PC-9 (cell line): ENCODE measurements at regions of chr5 and their contacts with region 1.

Region 1: GRCh38 chr5:43120720-43121564 is at the start of gene ZNF131:
- DNase-seq: peak; percentile 95 to 100
- H3K4me3 ChIP-seq: peak within 1 kb of the TSS; percentile 73
- H3K27ac ChIP-seq: peak within 1 kb of the TSS; percentile 91
- H3K4me1 ChIP-seq: peaks cover 31% of the 10 kb centered on the region
- H3K27me3 ChIP-seq: no peaks in the 10 kb centered on the region
- CTCF ChIP-seq: no peak
- total RNA-seq, gene ZNF131: 79.5 and 82.4 TPM in 2 replicates

Region 2: DNA sequence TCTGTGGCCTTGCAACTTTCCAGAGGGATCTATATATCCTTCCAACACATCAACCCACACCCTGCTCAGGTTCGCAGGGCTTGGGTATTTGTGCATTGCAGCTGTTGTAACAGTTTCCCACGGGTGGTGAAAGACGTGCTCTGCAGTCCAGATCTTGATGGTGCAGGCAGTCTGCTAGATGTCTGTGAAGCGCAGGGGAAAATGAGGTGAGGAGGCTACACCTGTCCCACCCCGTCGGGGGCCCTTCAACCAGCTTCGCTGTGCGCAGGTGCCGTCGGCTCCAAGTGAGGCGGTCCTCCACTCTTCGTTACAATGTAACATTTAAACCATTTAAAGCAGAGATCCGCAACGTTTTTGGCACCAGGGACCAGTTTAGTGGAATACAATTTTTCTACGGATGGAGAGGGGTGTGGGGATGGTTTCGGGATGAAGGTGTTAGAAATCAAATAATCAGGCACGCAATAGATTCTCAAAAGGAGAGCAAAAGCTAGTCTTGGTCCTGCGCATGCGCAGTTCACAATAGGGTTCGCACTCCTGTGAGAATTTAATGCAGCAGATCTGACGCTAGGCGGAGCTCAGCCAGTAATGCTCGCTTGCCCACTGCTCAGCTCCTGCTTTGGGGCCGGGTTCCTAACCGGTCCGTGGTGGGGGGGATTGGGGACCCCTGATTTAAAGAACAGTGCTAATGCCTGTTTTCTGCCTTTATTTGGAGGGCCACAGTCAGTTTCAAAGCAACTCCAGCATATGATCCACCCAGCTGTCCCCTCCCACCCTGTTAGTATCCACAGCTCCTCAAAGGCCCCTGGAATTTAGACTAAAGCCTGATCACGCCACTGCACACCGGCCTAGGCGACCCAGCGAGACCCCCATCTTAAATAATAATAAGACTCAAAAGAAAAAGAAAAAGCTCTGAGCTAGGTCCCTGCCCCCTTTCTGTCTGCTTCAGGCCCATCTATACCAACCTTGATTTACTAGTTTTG is 212.1 kb before region 1 on chr5:
- CTCF ChIA-PET with region 1: interaction called, 7 read pairs
- POLR2A ChIA-PET with region 1: interaction called, 3 read pairs
- intact Hi-C with region 1: loop called (anchors 1 kb)
- DNase-seq: peak; percentile 75 to 92
- H3K4me3 ChIP-seq: peak overlapping the region; percentile 28; the same call in 1 of the 2 replicates
- H3K27ac ChIP-seq: no peak overlapping the region
- H3K4me1 ChIP-seq: 0 out of 2 replicates have a peak, but pooled peaks cover 13% of the 10 kb centered on the region
- H3K27me3 ChIP-seq: peaks cover 10% of the 10 kb centered on the region; the same call in 1 of the 2 replicates
- CTCF ChIP-seq: peak; percentile 94

Region 3: DNA sequence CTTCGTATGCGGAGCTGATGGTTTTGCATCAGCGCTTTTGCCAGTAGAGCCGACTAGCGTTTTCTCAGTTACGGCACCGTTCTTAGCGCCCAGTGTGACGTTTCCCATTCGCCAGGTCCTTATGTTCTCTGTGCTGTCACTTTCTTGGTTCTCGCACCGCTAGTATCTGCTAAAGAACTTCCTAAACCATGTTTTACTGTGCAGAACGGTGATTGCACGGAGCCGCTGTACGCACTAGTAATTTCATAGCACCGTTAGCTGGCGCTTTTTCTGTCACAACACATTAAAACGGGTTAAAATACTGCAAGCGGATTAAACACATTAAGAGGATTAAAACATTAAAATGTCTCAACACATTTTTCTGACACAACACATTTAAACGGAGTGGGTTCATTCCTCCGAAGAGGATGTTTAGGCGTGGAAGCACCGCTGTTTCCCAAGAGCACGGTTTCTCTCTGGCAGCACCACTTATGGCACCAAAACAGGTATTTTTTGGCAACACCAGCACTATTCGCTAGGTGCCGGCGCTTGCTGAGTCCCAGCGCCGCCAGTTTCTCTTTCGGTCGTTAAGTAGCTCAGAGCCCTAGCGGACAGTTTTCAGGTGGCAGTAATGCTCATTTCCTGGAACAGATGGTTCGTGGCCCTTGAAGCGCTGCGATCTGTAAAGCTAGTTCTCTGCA is 101.2 kb before region 1 on chr5:
- CTCF ChIA-PET with region 1: no interaction called
- POLR2A ChIA-PET with region 1: no interaction called
- intact Hi-C with region 1: loop called (anchors 5 kb)
- DNase-seq: peak; percentile 80 to 83
- H3K4me3 ChIP-seq: peak overlapping the region; percentile 50
- H3K27ac ChIP-seq: no peak overlapping the region
- H3K4me1 ChIP-seq: no peaks in the 10 kb centered on the region
- H3K27me3 ChIP-seq: no peaks in the 10 kb centered on the region
- CTCF ChIP-seq: peak; percentile 61; the same call in 1 of the 2 replicates

Region 4: DNA sequence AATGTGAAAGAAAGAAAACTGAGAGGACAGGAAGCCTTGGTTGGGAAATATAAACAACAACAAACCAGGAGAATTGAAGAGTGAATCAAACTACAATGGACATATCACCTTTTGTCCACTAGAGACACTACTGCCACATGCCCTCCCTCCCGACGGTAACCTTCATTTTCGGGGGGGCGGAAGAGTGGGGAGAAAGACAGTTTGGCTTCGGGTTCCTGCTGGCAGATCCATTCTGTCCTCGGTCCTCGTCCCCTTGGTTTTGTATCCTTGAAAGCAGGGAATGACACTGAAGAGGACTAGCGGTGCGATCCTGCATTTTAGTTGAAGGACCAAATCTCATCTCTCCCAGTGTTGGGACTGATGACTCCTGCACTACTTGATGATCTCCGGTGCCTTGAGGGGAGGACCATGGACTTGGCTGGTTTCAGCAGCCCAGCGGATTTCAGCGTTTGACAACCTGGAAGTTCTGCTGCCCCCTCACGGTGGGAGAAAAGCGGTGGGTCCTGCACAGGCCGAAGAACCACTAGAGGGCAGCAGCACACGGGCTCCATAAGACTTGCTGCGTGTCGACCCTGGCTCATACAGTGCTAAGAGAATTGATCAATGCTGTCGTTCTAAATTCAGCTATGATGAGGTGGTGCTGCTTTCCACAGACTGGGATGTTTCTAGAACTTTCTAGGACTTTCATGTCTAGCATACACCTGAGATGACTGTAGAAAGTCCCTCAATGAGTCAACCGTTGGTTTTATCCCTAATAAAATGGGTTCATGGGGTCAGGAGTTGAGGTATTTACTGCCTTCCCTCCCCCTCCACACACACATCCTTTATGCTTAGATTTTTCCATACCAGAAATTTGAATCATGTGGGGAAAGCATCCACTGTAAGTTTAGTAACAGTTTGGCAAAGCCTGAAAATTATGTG is 15.3 kb before region 1 on chr5:
- CTCF ChIA-PET with region 1: interaction called, 21 read pairs
- POLR2A ChIA-PET with region 1: interaction called, 11 read pairs
- intact Hi-C with region 1: no loop called
- DNase-seq: peak; percentile 90 to 96
- H3K4me3 ChIP-seq: peak overlapping the region; percentile 51
- H3K27ac ChIP-seq: no peak overlapping the region
- H3K4me1 ChIP-seq: peaks cover 8% of the 10 kb centered on the region; the same call in 1 of the 2 replicates
- H3K27me3 ChIP-seq: no peaks in the 10 kb centered on the region
- CTCF ChIP-seq: peak; percentile 100

Region 5: GRCh38 chr5:43244823-43245565 is 124.1 kb after region 1 on chr5:
- CTCF ChIA-PET with region 1: no interaction called
- POLR2A ChIA-PET with region 1: no interaction called
- intact Hi-C with region 1: no loop called
- DNase-seq: no peak
- H3K4me3 ChIP-seq: no peak overlapping the region
- H3K27ac ChIP-seq: no peak overlapping the region
- H3K4me1 ChIP-seq: no peaks in the 10 kb centered on the region
- H3K27me3 ChIP-seq: peaks cover 15% of the 10 kb centered on the region; the same call in 1 of the 2 replicates
- CTCF ChIP-seq: no peak

Region 6: GRCh38 chr5:43256261-43256966 is 135.5 kb after region 1 on chr5:
- CTCF ChIA-PET with region 1: no interaction called
- POLR2A ChIA-PET with region 1: no interaction called
- intact Hi-C with region 1: no loop called
- DNase-seq: peak in 1 of 2 experiments; percentile 33
- H3K4me3 ChIP-seq: no peak overlapping the region
- H3K27ac ChIP-seq: no peak overlapping the region
- H3K4me1 ChIP-seq: no peaks in the 10 kb centered on the region
- H3K27me3 ChIP-seq: 0 out of 2 replicates have a peak, but pooled peaks cover 25% of the 10 kb centered on the region
- CTCF ChIP-seq: no peak

Region 7: DNA sequence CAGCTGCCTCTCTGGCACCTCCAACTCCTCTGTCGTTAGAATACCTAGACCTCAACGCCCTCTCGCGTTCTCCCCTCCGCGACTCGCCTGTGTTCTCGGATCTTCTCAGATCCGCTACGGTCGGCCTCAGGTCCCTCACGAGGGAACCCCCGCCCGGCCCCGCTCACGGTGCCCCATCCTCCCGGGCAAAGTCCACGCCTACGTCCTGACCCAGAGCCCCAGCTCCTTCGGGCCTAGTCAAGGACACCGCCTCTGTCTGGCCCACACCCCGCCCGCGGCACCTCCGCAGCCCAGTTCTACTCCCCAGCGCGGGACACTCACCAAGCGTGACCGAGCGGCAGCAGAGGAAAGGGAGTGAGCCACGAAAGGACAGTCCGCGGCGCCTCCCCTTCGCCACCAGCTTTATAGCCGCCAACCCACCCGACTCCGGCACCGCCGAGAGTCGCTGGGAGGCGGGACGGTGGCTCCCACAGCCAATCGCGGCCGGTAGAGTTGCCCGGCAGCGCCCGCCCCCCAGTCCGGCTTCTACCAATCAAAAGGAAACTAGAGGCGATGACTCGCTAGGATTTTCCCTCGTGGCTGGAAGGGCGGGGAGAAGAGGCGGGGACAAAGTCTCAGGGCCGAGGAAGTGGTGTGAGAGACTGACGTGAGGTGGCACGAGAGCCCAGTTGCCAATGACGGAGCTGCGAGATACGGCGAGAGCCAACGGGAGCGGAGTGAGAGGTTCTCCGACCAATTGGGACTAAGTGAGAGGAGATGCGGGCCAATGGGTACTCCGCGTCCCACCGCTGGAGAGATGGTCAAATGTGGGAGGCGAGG is 192.3 kb after region 1 on chr5 and contains the start of gene HMGCS1:
- CTCF ChIA-PET with region 1: no interaction called
- POLR2A ChIA-PET with region 1: interaction called, 20 read pairs
- intact Hi-C with region 1: loop called (anchors 1 kb)
- DNase-seq: peak; percentile 100
- H3K4me3 ChIP-seq: peak within 1 kb of the TSS; percentile 72
- H3K27ac ChIP-seq: peak within 1 kb of the TSS; percentile 73
- H3K4me1 ChIP-seq: peaks cover 66% of the 10 kb centered on the region
- H3K27me3 ChIP-seq: no peaks in the 10 kb centered on the region
- CTCF ChIP-seq: peak; percentile 24; the same call in 1 of the 2 replicates
- total RNA-seq, gene HMGCS1: 152 and 189 TPM in 2 replicates

Region 8: DNA sequence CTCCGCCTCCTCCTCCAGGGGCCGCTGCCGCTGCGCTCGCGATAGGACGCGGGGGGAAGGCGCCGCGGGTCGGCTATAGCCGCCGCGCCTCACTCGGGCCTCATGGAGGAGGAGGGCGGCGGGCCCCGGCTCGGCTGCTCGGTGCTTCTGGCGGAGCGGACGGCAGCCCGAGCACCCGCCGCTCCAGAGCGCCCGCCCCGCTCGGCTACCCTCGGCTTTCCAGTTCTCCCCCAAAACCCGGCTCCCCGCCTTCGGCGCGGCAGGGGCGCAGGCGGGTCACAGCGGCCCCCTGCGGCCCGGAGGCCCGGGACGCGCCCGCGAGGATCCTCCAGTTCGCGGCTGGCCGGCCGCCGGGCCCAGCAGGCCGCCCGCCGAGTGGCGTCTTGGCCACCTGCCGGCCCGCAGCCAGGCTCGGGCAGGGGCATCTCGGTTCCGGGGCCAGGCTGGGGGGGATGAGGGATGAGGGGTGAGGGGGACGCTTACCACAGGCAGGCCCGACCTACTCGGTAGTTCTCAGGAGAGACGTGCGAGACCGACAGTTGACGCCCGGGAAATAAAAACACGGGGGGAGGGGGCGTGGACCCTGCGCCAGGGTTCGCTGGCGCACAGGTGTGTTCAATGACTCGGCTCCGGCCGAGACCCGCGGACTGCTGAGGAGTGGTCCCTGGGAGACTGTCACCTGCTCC is 436.1 kb after region 1 on chr5 and contains the start of gene PAIP1:
- CTCF ChIA-PET with region 1: interaction called, 5 read pairs
- POLR2A ChIA-PET with region 1: no interaction called
- intact Hi-C with region 1: loop called (anchors 2 kb)
- DNase-seq: peak; percentile 86 to 98
- H3K4me3 ChIP-seq: peak within 1 kb of the TSS; percentile 88
- H3K27ac ChIP-seq: peak within 1 kb of the TSS; percentile 76
- H3K4me1 ChIP-seq: peaks cover 34% of the 10 kb centered on the region
- H3K27me3 ChIP-seq: no peaks in the 10 kb centered on the region
- CTCF ChIP-seq: peak; percentile 71
- total RNA-seq, gene PAIP1: 183 and 191 TPM in 2 replicates